T-cell (primary cell): ENCODE measurements at regions of chr13 and their contacts with region 1.

Region 1: GRCh38 chr13:41352935-41353840 is 42.1 kb downstream of the NAA16 start:
- DNase-seq: peak in 34 of 35 experiments; percentile 9 to 84 (median 44)
- ATAC-seq: peak in 2 of 4 experiments; percentile 7 to 55
- H3K4me3 ChIP-seq: no peak overlapping the region
- H3K4me3 Mint-ChIP-seq: peak overlapping the region in 2 of 3 donors; percentile 21 to 37
- H3K27ac ChIP-seq: peak overlapping the region; percentile 45
- H3K27ac Mint-ChIP-seq: peak overlapping the region; percentile 85 to 91
- H3K4me1 ChIP-seq: peaks cover 31 to 41% of the 10 kb centered on the region in 2 experiments
- H3K4me1 Mint-ChIP-seq: peaks cover 57 to 72% (median 61%) of the 10 kb centered on the region in 3 donors
- H3K27me3 ChIP-seq: no peaks in the 10 kb centered on the region
- H3K27me3 Mint-ChIP-seq: no peaks in the 10 kb centered on the region

Region 2: GRCh38 chr13:41332829-41333228 is 20.4 kb before region 1 on chr13:
- CTCF ChIA-PET with region 1: interaction called, 6 to 10 read pairs
- POLR2A ChIA-PET with region 1: interaction called in 1 of 2 experiments, 4 read pairs
- DNase-seq: no peak
- ATAC-seq: no peak
- H3K4me3 ChIP-seq: no peak overlapping the region
- H3K4me3 Mint-ChIP-seq: no peak overlapping the region
- H3K27ac ChIP-seq: no peak overlapping the region
- H3K27ac Mint-ChIP-seq: peak overlapping the region in 1 of 2 donors; percentile 62
- H3K4me1 ChIP-seq: peaks cover 0 to 4% of the 10 kb centered on the region in 2 experiments
- H3K4me1 Mint-ChIP-seq: peaks cover 38 to 60% (median 43%) of the 10 kb centered on the region in 3 donors
- H3K27me3 ChIP-seq: no peaks in the 10 kb centered on the region
- H3K27me3 Mint-ChIP-seq: no peaks in the 10 kb centered on the region

Region 3: GRCh38 chr13:41652727-41653361 is 299.7 kb after region 1 on chr13:
- CTCF ChIA-PET with region 1: interaction called, 3 to 15 read pairs
- POLR2A ChIA-PET with region 1: interaction called in 1 of 2 experiments, 3 read pairs
- DNase-seq: peak in 29 of 35 experiments; percentile 7 to 71 (median 25)
- ATAC-seq: peak in 2 of 4 experiments; percentile 20 to 50
- H3K4me3 ChIP-seq: no peak overlapping the region
- H3K4me3 Mint-ChIP-seq: no peak overlapping the region
- H3K27ac ChIP-seq: no peak overlapping the region
- H3K27ac Mint-ChIP-seq: no peak overlapping the region
- H3K4me1 ChIP-seq: no peaks in the 10 kb centered on the region
- H3K4me1 Mint-ChIP-seq: peaks cover 13 to 19% (median 18%) of the 10 kb centered on the region in 3 donors
- H3K27me3 ChIP-seq: no peaks in the 10 kb centered on the region
- H3K27me3 Mint-ChIP-seq: no peaks in the 10 kb centered on the region